AG04449 (cell line): ENCODE measurements at regions of chr6 and their contacts with region 1.

Region 1: DNA sequence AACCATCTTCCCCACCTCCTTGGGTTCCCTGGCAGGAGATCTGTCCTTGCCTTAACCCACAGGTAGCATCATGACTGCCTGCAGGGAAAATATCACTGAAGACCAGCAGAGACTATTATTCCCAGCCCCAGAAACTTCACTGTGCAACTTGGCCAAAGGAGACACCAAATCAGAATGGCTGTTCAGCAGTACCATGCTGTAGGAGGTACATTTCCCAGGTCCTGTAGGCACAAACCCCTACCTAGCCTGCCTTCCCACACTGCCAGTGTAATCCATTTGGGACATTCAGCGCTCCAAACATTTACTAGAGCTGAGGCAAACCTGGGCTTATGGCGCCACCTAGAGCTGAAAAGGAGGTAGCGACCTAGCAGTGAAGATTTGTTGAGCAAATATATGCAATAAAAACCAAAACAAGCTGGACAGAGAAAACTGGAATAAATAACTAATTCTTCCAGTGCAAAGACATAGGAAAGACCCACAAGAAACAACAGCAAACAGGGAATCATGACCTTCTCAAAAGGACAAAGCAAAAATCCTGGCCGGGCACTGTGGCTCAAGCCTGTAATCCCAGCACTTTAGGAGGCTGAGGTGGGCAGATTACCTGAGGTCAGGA is 60.3 kb downstream of the VTA1 start:
- DNase-seq: no peak
- H3K4me3 ChIP-seq: no peak overlapping the region
- CTCF ChIP-seq: peak; percentile 72

Region 2: GRCh38 chr6:142155895-142156757 is 51.2 kb before region 1 on chr6:
- CTCF ChIA-PET with region 1: interaction called, 34 read pairs
- POLR2A ChIA-PET with region 1: no interaction called
- DNase-seq: no peak
- H3K4me3 ChIP-seq: no peak overlapping the region
- CTCF ChIP-seq: no peak

Region 3: DNA sequence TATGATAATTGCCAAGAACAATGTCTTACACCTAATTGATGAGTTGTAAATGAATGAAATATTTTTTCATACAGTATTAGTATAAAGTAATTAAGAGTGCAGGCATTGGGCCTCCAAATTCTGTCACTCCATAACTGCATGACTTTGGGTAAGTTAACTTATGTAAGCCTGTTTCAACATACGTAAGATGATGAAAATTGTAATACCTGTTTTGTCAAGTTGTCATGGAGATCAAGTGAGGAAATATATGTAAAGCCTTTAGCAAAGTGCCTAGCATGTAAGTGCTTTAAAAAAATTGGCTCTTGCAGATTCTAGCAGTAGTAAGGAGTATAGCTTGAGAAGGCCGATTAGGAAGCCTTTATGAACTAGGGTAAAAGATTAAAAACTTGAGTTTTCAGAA is 30.2 kb before region 1 on chr6:
- CTCF ChIA-PET with region 1: interaction called, 12 read pairs
- POLR2A ChIA-PET with region 1: no interaction called
- DNase-seq: no peak
- H3K4me3 ChIP-seq: no peak overlapping the region
- CTCF ChIP-seq: no peak

Region 4: DNA sequence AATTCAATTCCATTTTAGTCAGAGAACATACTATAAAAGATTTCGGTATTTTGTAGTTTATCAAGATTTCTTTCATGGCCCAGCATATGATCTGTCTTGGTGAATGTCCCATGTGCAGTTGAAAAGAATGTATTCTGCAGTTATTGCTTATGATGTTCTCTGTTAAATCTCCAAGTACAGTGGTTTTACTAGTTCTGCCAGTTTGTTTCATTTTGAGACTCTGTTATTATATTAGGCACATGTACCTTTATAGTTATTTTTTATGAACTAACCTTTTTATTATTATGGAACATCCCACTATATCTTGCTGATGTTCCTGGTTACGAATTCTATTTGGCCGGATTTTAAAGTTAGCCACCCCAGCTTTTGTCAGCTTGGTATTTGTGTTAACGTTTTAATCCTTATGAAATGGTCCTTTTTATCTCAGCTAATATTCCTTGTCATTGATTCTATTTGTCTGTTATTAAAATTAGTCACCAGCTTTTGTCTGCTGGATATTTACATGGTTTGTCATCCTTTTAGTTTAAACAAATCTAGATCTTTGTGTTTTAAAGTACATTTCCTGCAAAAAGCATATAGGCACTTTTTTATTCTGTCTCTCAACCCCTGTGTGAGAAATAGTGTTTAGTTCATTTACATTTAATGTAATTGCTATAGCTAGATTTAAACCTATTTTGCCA is 11.4 kb before region 1 on chr6:
- CTCF ChIA-PET with region 1: interaction called, 39 read pairs
- POLR2A ChIA-PET with region 1: no interaction called
- DNase-seq: no peak
- H3K4me3 ChIP-seq: no peak overlapping the region
- CTCF ChIP-seq: no peak

Region 5: GRCh38 chr6:142225115-142225514 is 17.7 kb after region 1 on chr6:
- CTCF ChIA-PET with region 1: interaction called, 14 read pairs
- POLR2A ChIA-PET with region 1: no interaction called
- DNase-seq: no peak
- H3K4me3 ChIP-seq: no peak overlapping the region
- CTCF ChIP-seq: no peak